Heart right ventricle (tissue), 16 donors: ENCODE measurements at regions of chr4 and their contacts with region 1.

Region 1: GRCh38 chr4:175176710-175177109 is 258.6 kb downstream of the ADAM29 start:
- DNase-seq: no peak
- ATAC-seq: no peak
- H3K4me3 ChIP-seq: no peak overlapping the region
- H3K27ac ChIP-seq: no peak overlapping the region
- H3K4me1 ChIP-seq: no peaks in the 10 kb centered on the region
- H3K27me3 ChIP-seq: no peaks in the 10 kb centered on the region
- CTCF ChIP-seq: no peak

Region 2: DNA sequence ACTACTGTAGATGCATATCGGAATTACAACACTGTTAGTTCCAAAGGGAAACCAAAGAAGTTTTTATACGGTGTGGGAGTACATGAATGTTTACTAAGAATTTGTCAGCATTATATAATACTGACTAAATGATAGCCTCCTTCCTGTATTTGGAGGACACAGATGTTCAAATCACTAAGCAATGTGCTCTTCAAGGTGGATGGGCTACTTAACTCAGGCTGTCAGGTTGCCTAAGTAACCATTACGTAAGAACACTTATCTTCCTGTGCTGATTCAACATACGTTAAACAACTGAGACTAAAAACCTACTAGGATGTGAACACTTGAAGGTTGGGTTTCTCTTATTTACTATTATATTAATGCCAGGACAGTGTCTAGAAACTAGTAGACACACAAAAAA is 572.5 kb before region 1 on chr4:
- intact Hi-C with region 1: loop called in 1 of 10 experiments (anchors 10 kb)
- DNase-seq: no peak
- ATAC-seq: peak in 1 of 8 donors; percentile 16
- H3K4me3 ChIP-seq: no peak overlapping the region
- H3K27ac ChIP-seq: no peak overlapping the region
- H3K4me1 ChIP-seq: no peaks in the 10 kb centered on the region
- H3K27me3 ChIP-seq: no peaks in the 10 kb centered on the region
- CTCF ChIP-seq: no peak

Region 3: GRCh38 chr4:174996079-174996478 is 180.6 kb before region 1 on chr4:
- intact Hi-C with region 1: no loop called
- DNase-seq: no peak
- ATAC-seq: no peak
- H3K4me3 ChIP-seq: no peak overlapping the region
- H3K27ac ChIP-seq: no peak overlapping the region
- H3K4me1 ChIP-seq: no peaks in the 10 kb centered on the region
- H3K27me3 ChIP-seq: no peaks in the 10 kb centered on the region
- CTCF ChIP-seq: no peak